K562 (cell line): ENCODE measurements at regions of chr10 and their contacts with region 1.

Region 1: DNA sequence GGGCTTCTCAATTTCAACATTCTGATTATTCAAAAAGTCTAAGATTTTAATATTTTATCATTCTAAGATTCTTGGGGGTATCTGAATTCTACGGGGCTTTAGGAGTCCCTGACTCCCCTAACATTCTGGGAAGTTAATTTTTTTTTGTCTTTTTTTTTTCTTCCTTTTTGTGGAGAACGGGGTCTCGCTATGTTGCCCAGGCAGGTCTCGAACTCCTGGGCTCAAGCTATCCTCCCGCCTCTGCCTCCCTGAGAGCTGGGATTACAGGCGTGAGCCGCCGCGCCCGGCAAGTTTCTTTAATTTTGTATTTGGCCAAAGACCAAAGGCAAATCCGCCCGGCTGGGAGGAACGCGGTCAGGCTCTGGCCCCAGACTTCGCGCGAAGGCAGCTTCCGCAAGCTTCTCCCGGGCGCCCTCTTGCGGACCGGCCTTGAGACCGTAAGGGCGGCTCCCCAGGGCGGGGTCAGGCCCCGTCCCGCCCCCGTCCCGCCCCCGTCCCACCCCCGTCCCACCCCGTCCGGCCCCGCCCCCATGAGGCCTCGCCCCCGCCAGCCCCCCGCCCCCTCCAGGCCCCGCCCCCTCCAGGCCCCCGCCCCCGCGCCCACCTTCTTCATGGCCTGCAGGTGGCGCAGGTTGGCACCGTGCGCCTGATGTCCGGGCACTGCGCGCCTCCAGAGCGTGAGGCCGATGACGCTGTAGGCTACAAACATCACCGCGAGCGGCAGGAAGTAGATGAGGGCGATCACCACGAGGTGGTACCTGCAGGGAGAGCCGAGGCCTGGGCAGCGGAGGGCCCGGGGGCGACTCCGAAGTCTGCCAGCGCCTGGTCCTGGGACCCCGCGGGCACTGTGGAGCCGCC is 8.2 kb downstream of the TACR2 start:
- DNase-seq: peak; percentile 96 to 99 (median 98)
- ATAC-seq: peak; percentile 91
- H3K4me3 ChIP-seq: peak overlapping the region; percentile 14; the same call in 1 of the 2 replicates
- H3K27ac ChIP-seq: peak overlapping the region; percentile 69; the same call in 2 of the 3 replicates
- H3K4me1 ChIP-seq: peaks cover 24 to 25% of the 10 kb centered on the region in 2 experiments
- H3K27me3 ChIP-seq: peaks cover 0 to under 1% of the 10 kb centered on the region in 2 experiments; a peak in 1 of 5 replicates
- CTCF ChIP-seq: peak; percentile 50 to 73 (median 68)
- EP300 ChIP-seq: no peak
- POLR2A ChIP-seq: peak; percentile 66
- RAD21 ChIP-seq: peak in 1 of 2 experiments; percentile 43; a peak in 2 of 4 replicates

Region 2: DNA sequence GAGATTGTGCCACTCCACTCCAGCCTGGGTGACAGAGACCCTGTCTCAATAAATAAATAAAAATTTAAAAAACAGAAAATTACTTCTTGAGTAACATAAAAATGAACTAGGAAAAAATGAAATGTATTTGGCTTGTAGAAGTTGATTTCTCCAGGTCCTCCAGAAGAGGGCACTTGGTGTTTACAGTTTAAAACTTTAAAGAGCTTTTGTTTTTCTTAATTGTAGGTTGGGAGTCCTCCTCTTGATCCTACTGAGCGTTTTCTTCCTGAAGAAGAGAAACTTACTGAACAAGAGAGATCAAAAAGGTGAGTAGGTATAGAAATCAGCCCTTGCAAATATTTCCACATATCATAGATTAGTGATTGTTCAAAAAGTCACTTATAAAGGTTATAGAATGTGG is 403.7 kb before region 1 on chr10:
- CTCF ChIA-PET with region 1: interaction called, 3 read pairs
- POLR2A ChIA-PET with region 1: no interaction called
- in situ Hi-C with region 1: no loop called
- intact Hi-C with region 1: loop called (anchors 5 kb)
- DNase-seq: peak in 2 of 4 experiments; percentile 38 to 56
- ATAC-seq: peak; percentile 83
- H3K4me3 ChIP-seq: no peak overlapping the region
- H3K27ac ChIP-seq: no peak overlapping the region
- H3K4me1 ChIP-seq: no peaks in the 10 kb centered on the region
- H3K27me3 ChIP-seq: no peaks in the 10 kb centered on the region
- CTCF ChIP-seq: peak; percentile 54 to 90 (median 62); a peak in 5 of 6 replicates
- EP300 ChIP-seq: no peak
- POLR2A ChIP-seq: no peak
- RAD21 ChIP-seq: peak; percentile 91 to 98

Region 3: DNA sequence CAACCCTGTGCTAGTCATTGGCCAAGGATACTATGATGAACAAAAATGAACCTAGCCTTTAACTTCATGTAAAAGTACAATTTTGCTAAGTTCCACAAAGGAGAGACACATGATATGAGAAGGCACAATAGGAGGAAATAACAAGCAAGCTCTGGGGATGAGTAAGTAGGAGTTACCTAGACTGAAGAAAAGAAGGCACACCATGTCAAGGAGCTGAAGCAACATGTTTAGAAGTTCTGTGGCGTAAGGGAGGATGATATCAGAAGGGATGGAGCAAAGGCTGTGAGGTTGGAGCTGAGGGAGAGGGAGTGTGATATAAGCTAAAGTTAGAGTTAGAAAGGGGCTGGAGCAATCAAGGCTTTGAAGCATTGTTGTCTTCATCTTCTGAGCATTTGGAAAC is 394.4 kb before region 1 on chr10:
- CTCF ChIA-PET with region 1: no interaction called
- POLR2A ChIA-PET with region 1: no interaction called
- in situ Hi-C with region 1: loop called (anchors 5 kb)
- intact Hi-C with region 1: loop called (anchors 5 kb)
- DNase-seq: no peak
- ATAC-seq: no peak
- H3K4me3 ChIP-seq: no peak overlapping the region
- H3K27ac ChIP-seq: no peak overlapping the region
- H3K4me1 ChIP-seq: peaks cover 10 to 11% of the 10 kb centered on the region in 2 experiments; a peak in 4 of 5 replicates
- H3K27me3 ChIP-seq: no peaks in the 10 kb centered on the region
- CTCF ChIP-seq: no peak
- EP300 ChIP-seq: no peak
- POLR2A ChIP-seq: no peak
- RAD21 ChIP-seq: no peak

Region 4: DNA sequence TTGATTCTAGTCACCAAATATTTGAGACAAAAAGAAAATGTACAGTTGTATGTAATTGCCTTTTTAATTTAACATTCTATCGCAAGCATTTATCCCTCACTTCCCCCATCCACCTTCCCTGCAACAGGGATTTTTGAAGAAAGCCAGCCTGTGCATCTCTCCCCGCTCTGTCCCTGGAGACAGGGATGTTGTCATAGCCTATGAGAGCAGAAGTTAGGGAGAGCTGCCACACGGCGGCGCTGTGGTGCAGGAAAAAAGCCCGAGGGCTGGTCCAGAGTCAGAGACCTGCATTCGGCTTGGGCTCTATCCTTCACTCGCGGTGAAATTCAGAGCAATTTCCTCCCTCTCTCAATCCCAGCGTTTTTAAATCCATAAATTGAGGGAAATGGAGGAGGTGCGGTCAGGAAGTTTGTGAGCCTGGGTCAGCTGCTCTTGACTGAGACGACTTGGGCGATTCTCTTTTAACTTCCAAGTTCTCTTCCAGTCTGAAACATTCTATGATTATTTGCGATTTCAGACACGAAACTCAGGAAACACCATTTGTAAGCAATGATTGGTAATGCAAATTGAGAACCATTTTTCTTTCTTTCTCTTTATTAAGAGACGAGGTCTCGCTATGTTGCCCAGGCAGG is 170.9 kb before region 1 on chr10:
- CTCF ChIA-PET with region 1: interaction called, 10 read pairs
- POLR2A ChIA-PET with region 1: no interaction called
- in situ Hi-C with region 1: no loop called
- intact Hi-C with region 1: loop called (anchors 1 kb)
- DNase-seq: peak; percentile 89 to 94 (median 92)
- ATAC-seq: peak; percentile 97
- H3K4me3 ChIP-seq: no peak overlapping the region
- H3K27ac ChIP-seq: no peak overlapping the region
- H3K4me1 ChIP-seq: peaks cover 13% of the 10 kb centered on the region in 2 experiments; a peak in 4 of 5 replicates
- H3K27me3 ChIP-seq: no peaks in the 10 kb centered on the region
- CTCF ChIP-seq: peak; percentile 94 to 99 (median 97)
- EP300 ChIP-seq: no peak
- POLR2A ChIP-seq: no peak
- RAD21 ChIP-seq: peak; percentile 99 to 100

Region 5: DNA sequence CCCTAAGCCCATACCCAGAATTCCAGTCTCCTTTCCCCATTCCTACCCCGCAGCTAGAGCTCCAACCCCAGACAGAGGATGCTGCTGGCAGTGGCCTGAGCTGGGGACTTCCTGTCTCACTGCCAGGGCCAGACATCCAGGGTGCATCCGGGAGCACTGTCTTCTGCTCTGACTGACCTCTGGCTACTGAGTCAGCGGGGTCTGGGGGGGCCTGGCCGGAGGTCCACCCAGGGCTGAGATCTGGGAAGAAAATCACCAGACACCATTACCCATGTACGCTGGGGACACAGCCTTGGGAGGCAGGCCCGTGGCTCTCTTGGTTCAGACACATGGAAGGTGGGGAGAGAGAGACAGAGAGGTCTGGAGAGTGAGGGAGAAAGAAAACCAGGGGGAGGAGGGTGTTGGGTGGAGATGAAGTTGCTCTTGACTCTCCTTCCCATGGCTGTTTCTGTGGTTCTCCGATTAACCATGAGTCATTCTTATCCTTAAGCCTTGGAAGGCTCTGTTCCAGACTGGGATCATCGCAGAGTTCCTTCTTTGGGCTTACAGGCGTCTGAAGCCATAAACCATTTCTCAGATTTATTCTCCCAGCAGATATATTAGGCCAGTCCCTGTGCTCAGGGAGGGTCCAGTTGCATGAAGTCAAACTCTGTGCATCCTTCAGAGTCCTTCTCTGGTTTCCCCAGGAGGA is 66.3 kb after region 1 on chr10:
- CTCF ChIA-PET with region 1: no interaction called
- POLR2A ChIA-PET with region 1: no interaction called
- in situ Hi-C with region 1: no loop called
- intact Hi-C with region 1: no loop called
- DNase-seq: no peak
- ATAC-seq: no peak
- H3K4me3 ChIP-seq: no peak overlapping the region
- H3K27ac ChIP-seq: no peak overlapping the region
- H3K4me1 ChIP-seq: no peaks in the 10 kb centered on the region; a peak in 1 of 5 replicates
- H3K27me3 ChIP-seq: peaks cover 56 to 63% of the 10 kb centered on the region in 2 experiments
- CTCF ChIP-seq: no peak
- EP300 ChIP-seq: no peak
- POLR2A ChIP-seq: no peak
- RAD21 ChIP-seq: no peak